Activated CD8-positive, alpha-beta T cell treated with anti-CD3 and anti-CD28 coated beads for 36 hours (primary cell): ENCODE measurements at regions of chr17 and their contacts with region 1.

Region 1: GRCh38 chr17:75319904-75320691 is 30.9 kb upstream of the SLC25A19 start:
- DNase-seq: no peak
- ATAC-seq: no peak
- H3K4me3 Mint-ChIP-seq: no peak overlapping the region
- H3K27ac Mint-ChIP-seq: peak overlapping the region; percentile 36
- H3K4me1 Mint-ChIP-seq: peaks cover 18% of the 10 kb centered on the region
- H3K27me3 Mint-ChIP-seq: no peaks in the 10 kb centered on the region
- CTCF ChIP-seq: no peak

Region 2: DNA sequence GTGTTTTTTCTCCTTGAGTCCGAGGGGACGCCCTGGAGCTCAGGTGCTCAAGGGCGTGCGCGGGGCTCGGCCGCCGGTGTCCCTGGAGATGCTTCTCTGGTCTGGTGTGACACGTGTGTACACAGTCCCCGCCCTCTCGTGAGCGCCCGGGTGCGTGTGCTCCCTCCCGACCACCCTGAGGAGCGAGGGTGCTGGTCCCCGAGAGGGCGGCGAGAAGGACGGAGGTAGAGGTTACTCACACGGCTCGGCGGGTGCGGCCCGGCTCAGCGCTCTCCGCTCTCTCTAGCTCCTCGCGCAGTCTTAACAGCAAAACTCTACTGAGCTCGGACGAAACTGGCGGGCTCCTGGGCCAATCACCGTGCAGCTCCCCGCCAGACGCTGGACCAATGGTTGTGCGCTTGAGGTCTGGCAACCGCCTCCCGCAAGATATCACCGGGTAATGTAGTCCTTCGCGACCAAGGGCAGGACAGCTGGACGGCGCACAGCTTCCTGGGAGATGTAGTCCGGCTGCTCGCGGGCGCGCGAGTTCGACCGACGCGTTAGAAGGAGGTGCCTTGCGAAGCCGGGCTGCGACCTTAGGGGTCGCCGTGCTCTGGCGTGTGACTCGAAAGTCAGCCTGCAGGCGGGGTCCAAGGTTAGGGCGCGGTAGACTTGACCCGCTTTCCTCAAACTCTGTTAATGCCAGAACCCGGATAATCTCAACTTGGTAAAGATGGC is 30.8 kb before region 1 on chr17 and contains the start of gene SLC25A19:
- CTCF ChIA-PET with region 1: interaction called, 11 read pairs
- POLR2A ChIA-PET with region 1: interaction called, 4 read pairs
- intact Hi-C with region 1: no loop called
- DNase-seq: peak; percentile 99
- ATAC-seq: peak; percentile 93
- H3K4me3 Mint-ChIP-seq: peak within 1 kb of the TSS; percentile 89
- H3K27ac Mint-ChIP-seq: peak within 1 kb of the TSS; percentile 100
- H3K4me1 Mint-ChIP-seq: peaks cover 26% of the 10 kb centered on the region
- H3K27me3 Mint-ChIP-seq: no peaks in the 10 kb centered on the region
- CTCF ChIP-seq: no peak
- total RNA-seq, gene SLC25A19: 55.1 to 55.2 TPM

Region 3: DNA sequence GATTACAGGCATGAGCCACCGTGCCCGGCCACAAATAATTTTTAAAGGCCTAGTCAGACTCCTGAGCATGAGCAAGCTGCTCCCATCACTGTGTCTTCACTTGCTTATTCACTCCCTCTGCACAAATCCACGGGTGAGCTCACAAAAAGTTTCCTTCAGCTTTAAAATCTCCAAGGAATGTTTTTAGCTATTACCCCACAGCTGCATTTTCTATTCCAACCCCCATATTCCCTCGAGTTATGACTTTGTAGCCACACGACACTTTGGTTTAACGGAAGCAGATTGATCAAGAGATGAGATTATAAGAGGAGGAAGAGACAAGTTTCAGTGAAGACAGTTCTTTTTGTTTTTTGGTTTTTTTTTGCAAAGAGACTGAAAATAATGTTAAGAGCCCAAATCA is 18.2 kb after region 1 on chr17:
- CTCF ChIA-PET with region 1: interaction called, 38 read pairs
- POLR2A ChIA-PET with region 1: interaction called, 6 read pairs
- intact Hi-C with region 1: no loop called
- DNase-seq: no peak
- ATAC-seq: peak; percentile 26
- H3K4me3 Mint-ChIP-seq: peak overlapping the region; percentile 56
- H3K27ac Mint-ChIP-seq: peak overlapping the region; percentile 90
- H3K4me1 Mint-ChIP-seq: peaks cover 72% of the 10 kb centered on the region
- H3K27me3 Mint-ChIP-seq: no peaks in the 10 kb centered on the region
- CTCF ChIP-seq: no peak

Region 4: GRCh38 chr17:75371339-75371738 is 51.2 kb after region 1 on chr17:
- CTCF ChIA-PET with region 1: interaction called, 11 read pairs
- POLR2A ChIA-PET with region 1: no interaction called
- intact Hi-C with region 1: no loop called
- DNase-seq: no peak
- ATAC-seq: peak; percentile 48
- H3K4me3 Mint-ChIP-seq: no peak overlapping the region
- H3K27ac Mint-ChIP-seq: peak overlapping the region; percentile 23
- H3K4me1 Mint-ChIP-seq: peaks cover 68% of the 10 kb centered on the region
- H3K27me3 Mint-ChIP-seq: no peaks in the 10 kb centered on the region
- CTCF ChIP-seq: no peak

Region 5: GRCh38 chr17:75400326-75400939 is 80.3 kb after region 1 on chr17:
- CTCF ChIA-PET with region 1: interaction called, 34 read pairs
- POLR2A ChIA-PET with region 1: interaction called, 10 read pairs
- intact Hi-C with region 1: loop called (anchors 2 kb)
- DNase-seq: no peak
- ATAC-seq: no peak
- H3K4me3 Mint-ChIP-seq: no peak overlapping the region
- H3K27ac Mint-ChIP-seq: peak overlapping the region; percentile 34
- H3K4me1 Mint-ChIP-seq: peaks cover 54% of the 10 kb centered on the region
- H3K27me3 Mint-ChIP-seq: no peaks in the 10 kb centered on the region
- CTCF ChIP-seq: no peak

Region 6: DNA sequence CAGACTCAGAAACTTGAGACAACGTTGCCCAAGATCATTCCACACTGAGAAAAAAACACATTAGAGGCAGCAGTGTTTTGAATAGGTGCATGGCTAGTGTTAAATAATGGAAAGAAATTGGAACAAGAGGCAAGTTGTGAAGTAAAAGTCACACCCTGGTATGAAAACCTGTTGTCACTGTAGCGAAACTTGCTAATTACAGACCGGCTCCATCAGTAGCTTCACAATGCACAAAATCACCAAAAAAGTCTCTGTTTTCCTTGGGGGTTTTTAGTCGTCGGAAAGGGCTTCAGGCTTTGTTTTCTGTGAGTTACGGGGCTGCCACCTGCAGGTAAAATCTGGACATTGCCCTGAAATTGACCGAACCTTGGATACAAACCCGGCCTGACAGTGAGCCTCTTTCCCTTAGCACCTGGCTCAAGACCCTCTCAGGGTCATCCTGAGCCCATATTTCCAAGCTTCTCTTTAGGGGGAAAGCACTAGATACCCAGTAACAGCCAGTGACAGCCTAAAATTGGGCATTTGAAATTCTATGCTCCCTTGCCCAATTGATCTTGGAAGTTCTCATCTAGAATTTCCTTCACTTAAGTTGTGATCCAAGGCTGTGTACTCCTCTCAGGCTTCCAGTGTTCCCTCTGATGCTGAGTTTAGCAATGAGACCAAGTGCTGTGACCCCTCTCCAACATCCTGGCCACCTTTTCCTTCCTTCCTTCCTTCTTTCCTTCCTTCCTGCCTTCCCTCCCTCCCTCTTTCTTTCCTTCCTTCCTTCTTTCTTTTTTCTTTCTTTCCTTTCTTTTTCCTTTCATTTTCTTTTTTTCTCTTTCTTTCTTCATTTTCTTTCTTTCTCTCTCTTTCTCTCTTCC is 92.6 kb after region 1 on chr17:
- CTCF ChIA-PET with region 1: interaction called, 39 read pairs
- POLR2A ChIA-PET with region 1: interaction called, 4 read pairs
- intact Hi-C with region 1: loop called (anchors 2 kb)
- DNase-seq: peak; percentile 88
- ATAC-seq: peak; percentile 92
- H3K4me3 Mint-ChIP-seq: peak overlapping the region; percentile 33
- H3K27ac Mint-ChIP-seq: peak overlapping the region; percentile 23
- H3K4me1 Mint-ChIP-seq: peaks cover 14% of the 10 kb centered on the region
- H3K27me3 Mint-ChIP-seq: no peaks in the 10 kb centered on the region
- CTCF ChIP-seq: peak; percentile 81